A549 (cell line): ENCODE measurements at regions of chr17 and their contacts with region 1.

Region 1: GRCh38 chr17:17055286-17056155 is 13.3 kb downstream of the MPRIP start:
- DNase-seq: peak in 1 of 2 experiments; percentile 52
- ATAC-seq: peak; percentile 49 to 63; a peak in 4 of 6 replicates
- H3K4me3 ChIP-seq: no peak overlapping the region
- H3K27ac ChIP-seq: peak overlapping the region; percentile 44 to 66; a peak in 5 of 6 replicates
- H3K4me1 ChIP-seq: peaks cover 99% of the 10 kb centered on the region
- CTCF ChIP-seq: no peak
- EP300 ChIP-seq: no peak
- POLR2A ChIP-seq: no peak
- RAD21 ChIP-seq: no peak

Region 2: DNA sequence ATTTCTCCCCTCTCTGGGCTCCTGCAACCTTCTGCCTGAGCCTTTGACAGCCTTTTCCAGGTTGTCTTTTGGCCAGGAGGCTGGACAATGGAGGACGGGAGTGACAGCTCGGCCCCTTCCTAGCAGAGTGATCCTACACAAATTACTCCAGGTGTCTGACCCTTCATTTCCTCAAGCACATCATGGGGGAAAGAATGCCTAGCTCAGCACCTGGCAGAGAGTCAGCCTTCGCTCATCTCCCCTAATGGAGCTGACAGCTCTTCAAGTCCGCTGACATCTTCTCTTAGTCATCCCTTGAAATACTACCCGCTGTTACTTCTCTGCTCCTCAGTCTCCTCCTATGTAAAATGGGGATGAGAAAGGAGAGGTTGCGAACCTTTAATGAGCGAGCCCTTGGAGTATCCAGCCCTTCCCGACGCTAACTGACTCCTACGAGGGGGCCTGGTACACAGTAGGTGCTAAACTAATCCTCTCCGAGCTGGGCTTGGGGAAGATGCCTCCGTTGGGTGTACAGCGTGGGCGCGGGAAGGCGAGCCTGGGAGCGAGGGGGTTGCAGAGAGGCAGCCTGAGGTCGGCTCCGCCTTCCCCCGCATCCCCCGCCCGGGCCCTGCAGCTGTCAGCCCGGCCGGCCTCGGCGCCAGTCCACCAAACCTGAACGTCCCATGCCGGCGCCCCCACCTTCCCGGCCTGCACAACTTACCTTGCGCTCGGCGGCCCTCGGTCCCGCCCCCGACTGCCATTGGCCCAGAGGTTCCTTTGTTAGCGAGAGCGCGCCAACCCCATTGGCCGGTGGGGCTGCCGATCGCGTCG is 13.7 kb before region 1 on chr17:
- CTCF ChIA-PET with region 1: interaction called, 12 read pairs
- POLR2A ChIA-PET with region 1: no interaction called
- DNase-seq: peak; percentile 97 to 99
- ATAC-seq: peak; percentile 90 to 95
- H3K4me3 ChIP-seq: peak overlapping the region; percentile 90
- H3K27ac ChIP-seq: peak overlapping the region; percentile 87 to 91
- H3K4me1 ChIP-seq: peaks cover 47% of the 10 kb centered on the region
- CTCF ChIP-seq: no peak
- EP300 ChIP-seq: no peak
- POLR2A ChIP-seq: no peak
- RAD21 ChIP-seq: 0 out of 5 replicates have a peak, but pooled peaks of 1 of the 2 experiments have one; percentile 19